Activated T-helper 2 cell treated with anti-CD3 and anti-CD28 coated beads, Interferon-gamma antibody, Interleukin-2, Interleukin-4, amounts not matched to agents 10 μg/mL and 5 μg/mL and 100 μg/mL, durations not matched to agents 14 hours and 24 hours and 36 hours (primary cell): ENCODE measurements at regions of chr2 and their contacts with region 1.

Region 1: GRCh38 chr2:96208143-96209010 is at the start of gene STARD7:
- DNase-seq: peak; percentile 98
- H3K4me3 Mint-ChIP-seq: peak within 1 kb of the TSS; percentile 97
- H3K27ac Mint-ChIP-seq: peak within 1 kb of the TSS; percentile 87
- H3K4me1 Mint-ChIP-seq: peaks cover 45% of the 10 kb centered on the region
- H3K27me3 Mint-ChIP-seq: no peaks in the 10 kb centered on the region
- total RNA-seq, gene STARD7: 201 and 206 TPM in 2 replicates

Region 2: DNA sequence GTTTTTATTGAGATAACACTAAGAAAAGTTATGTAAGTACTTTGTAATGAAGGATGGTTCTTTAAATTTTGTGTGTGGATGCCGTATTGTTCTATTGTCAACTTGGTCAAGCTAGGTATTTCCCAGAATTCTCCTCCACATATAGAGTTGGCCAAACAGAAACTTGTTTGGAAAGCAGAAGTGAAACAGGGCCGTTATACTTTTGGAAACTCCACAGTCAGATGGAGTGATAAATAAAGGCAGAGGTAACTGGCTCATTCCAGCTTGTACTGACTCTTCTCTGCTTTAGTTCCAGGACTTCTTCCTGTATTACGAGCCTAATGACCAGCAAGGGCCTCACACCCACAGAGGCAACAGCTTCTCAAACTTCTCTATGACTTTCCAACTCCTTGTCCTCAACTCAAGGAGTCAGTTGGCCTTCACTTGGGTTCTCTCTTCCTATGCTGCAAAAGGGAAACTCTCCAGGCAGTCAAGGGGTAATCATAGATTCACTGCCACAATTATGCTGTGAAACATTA is 16.7 kb after region 1 on chr2:
- intact Hi-C with region 1: loop called (anchors 2 kb)
- DNase-seq: no peak
- H3K4me3 Mint-ChIP-seq: no peak overlapping the region
- H3K27ac Mint-ChIP-seq: peak overlapping the region; percentile 84
- H3K4me1 Mint-ChIP-seq: peaks cover 9% of the 10 kb centered on the region
- H3K27me3 Mint-ChIP-seq: no peaks in the 10 kb centered on the region

Region 3: GRCh38 chr2:96241900-96242611 is 33.7 kb after region 1 on chr2:
- intact Hi-C with region 1: loop called (anchors 1 kb)
- DNase-seq: peak; percentile 57
- H3K4me3 Mint-ChIP-seq: peak overlapping the region; percentile 62
- H3K27ac Mint-ChIP-seq: peak overlapping the region; percentile 92
- H3K4me1 Mint-ChIP-seq: peaks cover 46% of the 10 kb centered on the region
- H3K27me3 Mint-ChIP-seq: no peaks in the 10 kb centered on the region

Region 4: DNA sequence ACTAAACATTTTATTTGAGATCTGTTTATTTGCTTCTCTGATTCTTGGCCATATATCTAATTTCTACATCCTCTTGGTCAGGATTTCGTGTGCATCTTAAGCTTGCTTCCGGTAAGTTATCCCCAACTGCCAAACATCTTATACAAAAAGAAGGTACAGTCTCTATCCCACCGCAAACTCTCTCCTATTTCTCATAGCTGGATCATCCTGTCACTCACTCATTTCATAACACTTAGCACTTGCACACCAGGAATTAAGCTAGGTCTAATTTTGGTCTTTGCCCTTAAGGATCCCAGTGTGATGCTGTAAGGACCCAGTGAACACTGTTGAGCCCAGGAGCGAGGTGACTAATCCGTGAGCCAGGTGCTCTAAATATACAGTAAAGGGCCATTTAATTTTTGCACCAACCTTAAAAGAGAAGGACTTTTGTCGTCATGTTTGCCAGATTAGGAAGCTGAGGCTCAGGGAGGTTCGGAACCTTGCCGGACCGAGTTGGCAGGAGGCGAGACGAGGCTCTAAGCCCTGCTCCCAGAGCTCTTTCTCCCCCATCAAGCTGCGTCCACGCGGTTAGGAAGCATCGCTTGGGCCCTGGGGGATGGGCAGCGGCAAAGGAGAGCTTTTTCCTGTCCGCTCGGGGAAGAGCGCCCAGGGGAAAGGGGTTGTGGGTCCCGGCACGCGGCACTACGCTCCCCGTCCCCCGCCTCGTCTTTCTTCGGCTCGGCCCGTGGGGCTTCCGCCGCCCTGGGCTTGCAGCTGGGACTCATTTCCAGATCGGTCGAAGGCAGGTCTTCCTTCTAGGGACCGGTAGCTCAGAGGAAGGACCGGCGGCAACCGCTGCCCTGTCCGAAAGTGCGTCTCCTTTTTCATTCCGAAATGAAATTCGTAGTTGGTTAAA is 112.6 kb after region 1 on chr2:
- intact Hi-C with region 1: loop called (anchors 10 kb)
- DNase-seq: no peak
- H3K4me3 Mint-ChIP-seq: peak overlapping the region; percentile 88
- H3K27ac Mint-ChIP-seq: peak overlapping the region; percentile 86
- H3K4me1 Mint-ChIP-seq: peaks cover 54% of the 10 kb centered on the region
- H3K27me3 Mint-ChIP-seq: no peaks in the 10 kb centered on the region

Region 5: DNA sequence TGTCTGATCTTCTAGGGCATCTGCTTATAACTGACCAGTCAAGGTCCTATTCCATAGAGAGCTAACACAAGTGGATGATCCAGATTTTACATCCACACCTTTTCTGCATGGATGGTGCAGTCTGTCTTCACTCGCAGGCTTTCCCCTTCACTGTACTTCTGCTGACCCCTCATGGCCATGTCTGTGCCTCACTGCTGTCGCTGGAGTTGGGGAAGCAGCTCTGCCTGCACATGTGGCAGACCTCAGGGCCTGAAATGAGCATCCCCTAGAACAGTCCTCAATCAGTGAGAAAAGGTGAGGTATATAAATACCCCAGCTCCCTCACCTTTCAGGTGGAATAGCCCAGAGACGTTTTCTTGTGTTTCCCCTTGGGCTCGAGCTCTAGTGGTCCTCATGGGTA is 1147.5 kb after region 1 on chr2:
- intact Hi-C with region 1: no loop called
- DNase-seq: no peak
- H3K4me3 Mint-ChIP-seq: no peak overlapping the region
- H3K27ac Mint-ChIP-seq: no peak overlapping the region
- H3K4me1 Mint-ChIP-seq: no peaks in the 10 kb centered on the region
- H3K27me3 Mint-ChIP-seq: peaks cover 37% of the 10 kb centered on the region